ENCODE measurements at regions of chrX and their contacts with region 1.

Region 1: GRCh38 chrX:38220024-38220414 is 652 bp downstream of the SRPX start:
- H3K4me3 ChIP-seq: peak overlapping the region; percentile 42
- H3K27ac ChIP-seq: peak overlapping the region; percentile 38; the same call in 1 of the 2 replicates
- H3K4me1 ChIP-seq: peaks cover 4% of the 10 kb centered on the region
- CTCF ChIP-seq: peak; percentile 66

Region 2: GRCh38 chrX:38006291-38006690 is 213.7 kb before region 1 on chrX and contains the start of gene SYTL5:
- CTCF ChIA-PET with region 1: no interaction called
- POLR2A ChIA-PET with region 1: no interaction called
- H3K4me3 ChIP-seq: no peak within 1 kb of the TSS
- H3K27ac ChIP-seq: no peak within 1 kb of the TSS
- H3K4me1 ChIP-seq: no peaks in the 10 kb centered on the region
- CTCF ChIP-seq: no peak

Region 3: DNA sequence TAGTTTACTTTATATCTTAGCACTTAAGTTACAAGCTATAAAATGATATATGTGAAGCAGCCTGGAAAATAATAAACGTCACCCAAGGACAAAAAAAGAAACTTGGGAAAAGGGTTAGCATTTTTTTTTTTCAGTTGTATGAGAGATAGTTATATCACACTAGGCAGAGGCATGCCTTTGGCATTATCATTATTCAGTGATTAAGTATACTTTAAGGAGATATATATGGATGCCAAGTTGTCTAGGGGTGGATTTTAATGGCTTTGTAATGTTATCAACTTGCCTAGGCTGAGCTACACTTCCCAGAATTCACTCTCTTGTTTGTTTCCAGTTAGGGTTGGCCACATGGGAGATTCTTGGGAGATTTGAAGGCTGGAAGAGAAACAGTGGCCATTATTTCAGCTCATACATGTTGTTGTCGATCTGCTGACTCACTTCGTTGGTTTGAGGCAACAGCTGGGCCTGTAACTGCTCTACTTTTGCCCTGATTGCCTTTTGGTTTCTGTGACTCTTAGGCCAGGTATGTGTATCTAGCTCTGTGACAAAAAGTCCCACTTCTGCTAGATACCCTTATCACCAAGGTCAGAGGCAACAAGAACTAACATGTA is 12.2 kb after region 1 on chrX:
- CTCF ChIA-PET with region 1: interaction called, 10 read pairs
- POLR2A ChIA-PET with region 1: no interaction called
- H3K4me3 ChIP-seq: no peak overlapping the region
- H3K27ac ChIP-seq: no peak overlapping the region
- H3K4me1 ChIP-seq: no peaks in the 10 kb centered on the region
- CTCF ChIP-seq: no peak

Region 4: GRCh38 chrX:38282044-38282443 is 62.0 kb after region 1 on chrX:
- CTCF ChIA-PET with region 1: interaction called, 20 read pairs
- POLR2A ChIA-PET with region 1: no interaction called
- H3K4me3 ChIP-seq: no peak overlapping the region
- H3K27ac ChIP-seq: no peak overlapping the region
- H3K4me1 ChIP-seq: peaks cover 14% of the 10 kb centered on the region
- CTCF ChIP-seq: no peak

Region 5: DNA sequence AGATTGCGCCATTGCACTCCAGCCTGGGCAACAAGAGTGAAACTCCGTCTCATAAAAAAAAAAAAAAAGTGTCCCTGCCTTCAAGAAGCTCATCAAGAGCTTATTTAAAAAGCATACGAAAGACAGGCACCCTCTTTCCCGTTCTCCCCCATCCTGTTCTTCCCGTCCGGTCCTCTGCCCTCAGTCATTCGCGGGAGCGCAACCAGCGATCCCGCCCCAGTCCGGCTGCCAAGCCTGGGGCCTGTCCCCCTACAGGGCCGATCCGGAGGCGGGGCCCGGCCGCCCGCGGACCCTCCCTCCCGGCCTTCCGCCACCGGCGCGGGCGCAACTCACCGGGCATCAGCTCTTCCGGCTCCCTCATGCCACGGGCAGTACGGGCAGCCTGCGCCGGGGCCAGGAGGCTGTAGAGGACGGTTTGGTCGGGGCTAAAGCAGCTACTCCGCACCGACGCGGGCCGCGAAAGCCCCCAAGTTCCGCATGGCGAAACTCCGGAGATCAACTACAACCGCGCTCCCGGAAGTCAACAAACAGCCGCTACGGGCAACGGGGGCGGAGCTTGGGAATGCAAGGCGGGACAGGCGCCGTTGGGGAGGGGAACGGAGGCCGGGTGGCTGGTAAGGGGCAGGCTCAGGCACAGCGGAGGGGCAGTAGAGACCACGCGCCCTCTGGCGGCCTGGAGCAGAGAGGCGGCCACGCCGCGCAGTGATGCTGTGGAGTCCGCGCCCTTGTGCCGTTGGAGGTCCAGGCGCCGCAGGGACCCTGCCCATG is 107.2 kb after region 1 on chrX and contains the start of gene RPGR:
- CTCF ChIA-PET with region 1: interaction called, 12 read pairs
- POLR2A ChIA-PET with region 1: no interaction called
- H3K4me3 ChIP-seq: peak within 1 kb of the TSS; percentile 80
- H3K27ac ChIP-seq: peak within 1 kb of the TSS; percentile 47
- H3K4me1 ChIP-seq: no peaks in the 10 kb centered on the region; the same call in 1 of the 2 replicates
- CTCF ChIP-seq: peak; percentile 96